ENCODE measurements at regions of chr4 and their contacts with region 1.

Region 1: GRCh38 chr4:159175085-159175988 is 72.5 kb downstream of the RAPGEF2 start:
- DNase-seq: peak; percentile 53 to 92
- H3K4me3 ChIP-seq: no peak overlapping the region
- H3K27ac ChIP-seq: peak overlapping the region in 1 of 5 donors; percentile 52
- H3K4me1 ChIP-seq: peaks cover 24 to 95% (median 52%) of the 10 kb centered on the region in 4 donors
- H3K27me3 ChIP-seq: no peaks in the 10 kb centered on the region
- CTCF ChIP-seq: peak in 5 of 7 experiments; percentile 71 to 87 (median 83)
- EP300 ChIP-seq: no peak
- POLR2A ChIP-seq: no peak

Region 2: DNA sequence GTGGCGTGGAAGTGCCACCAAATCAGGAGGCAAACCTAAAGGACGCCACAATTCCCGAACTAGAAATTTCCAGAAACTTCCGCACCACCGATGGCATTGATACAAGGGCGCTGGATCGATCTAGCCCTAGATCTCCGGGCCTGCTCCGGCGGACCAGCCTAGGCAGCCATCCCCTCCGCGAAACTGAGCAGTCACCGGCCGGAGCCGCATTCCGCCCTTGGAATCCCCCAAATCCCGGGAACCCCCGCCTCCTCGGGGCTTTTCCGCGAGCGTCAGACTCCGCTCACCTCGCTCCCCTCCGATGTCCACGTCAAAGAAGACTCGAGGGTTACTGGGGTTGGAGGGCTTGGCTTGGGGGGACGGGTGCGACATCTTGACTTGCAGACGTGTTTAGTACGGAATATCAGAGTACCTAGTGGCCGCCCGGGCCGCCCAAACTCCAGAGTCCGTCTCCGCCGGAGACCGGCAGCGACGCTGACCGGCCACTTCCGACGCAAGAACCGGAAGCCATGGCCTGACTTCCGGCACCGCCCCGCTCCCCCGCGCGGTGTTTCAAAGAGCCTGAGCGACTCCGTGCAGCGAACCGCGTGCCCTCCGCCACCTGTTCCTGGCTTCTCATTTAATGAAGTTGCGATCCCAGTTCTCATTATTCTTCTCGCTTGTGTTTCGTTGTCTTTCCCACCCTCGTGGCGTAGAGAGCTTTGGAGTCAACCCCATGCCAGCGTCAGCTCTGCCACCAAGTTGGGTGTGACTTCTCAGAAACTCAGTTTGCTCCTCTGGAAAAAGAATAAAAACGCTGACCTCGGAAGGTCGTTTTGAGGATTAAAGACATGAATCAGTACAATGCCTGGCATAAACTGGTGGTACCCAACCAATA is 452.2 kb before region 1 on chr4 and contains the start of gene PPID:
- intact Hi-C with region 1: loop called (anchors 10 kb)
- DNase-seq: peak; percentile 86 to 96
- H3K4me3 ChIP-seq: peak within 1 kb of the TSS; percentile 68 to 93 (median 82)
- H3K27ac ChIP-seq: peak within 1 kb of the TSS; percentile 88 to 95 (median 93)
- H3K4me1 ChIP-seq: peaks cover 10 to 30% (median 18%) of the 10 kb centered on the region in 4 donors
- H3K27me3 ChIP-seq: no peaks in the 10 kb centered on the region
- CTCF ChIP-seq: no peak
- EP300 ChIP-seq: no peak
- POLR2A ChIP-seq: peak in 1 of 4 donors; percentile 43
- total RNA-seq, gene PPID: 1.2 to 98.5 (median 12.9) TPM

Region 3: DNA sequence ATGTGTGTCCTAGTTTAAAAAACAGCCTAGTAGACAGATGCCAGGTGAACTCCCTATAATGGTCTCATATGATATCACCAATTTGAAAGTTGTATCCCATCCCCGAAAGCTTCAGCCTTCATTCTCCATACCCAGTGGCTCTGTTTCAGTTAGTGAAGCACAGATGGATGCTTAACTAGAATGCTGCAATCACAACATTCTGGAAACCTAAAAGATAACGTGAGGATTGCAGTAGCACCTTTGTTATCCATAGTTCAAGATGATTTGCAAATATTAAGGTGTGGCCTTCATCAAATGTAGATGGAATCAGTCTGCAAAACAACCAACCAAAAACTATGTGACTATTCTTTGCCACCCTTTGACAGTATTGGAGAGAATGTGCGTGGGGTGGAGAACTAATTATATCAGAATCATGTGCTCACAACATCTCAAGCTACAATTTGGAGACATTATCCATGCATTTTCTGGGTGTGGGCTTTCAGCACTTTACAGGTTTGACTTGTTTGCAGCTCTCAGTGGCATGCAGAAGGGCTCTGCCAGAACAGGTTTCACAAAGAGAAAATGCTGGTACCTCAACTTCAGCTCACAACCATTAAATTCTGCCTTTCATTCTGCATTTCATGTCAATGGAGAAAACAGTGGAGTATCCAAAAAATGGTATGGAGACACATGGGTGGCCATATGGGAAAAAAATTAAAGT is 433.9 kb before region 1 on chr4:
- intact Hi-C with region 1: no loop called
- DNase-seq: peak in 1 of 2 donors; percentile 23
- H3K4me3 ChIP-seq: no peak overlapping the region
- H3K27ac ChIP-seq: no peak overlapping the region
- H3K4me1 ChIP-seq: no peaks in the 10 kb centered on the region
- H3K27me3 ChIP-seq: no peaks in the 10 kb centered on the region
- CTCF ChIP-seq: no peak
- EP300 ChIP-seq: no peak
- POLR2A ChIP-seq: no peak

Region 4: GRCh38 chr4:158860856-158861255 is 314.5 kb before region 1 on chr4:
- intact Hi-C with region 1: loop called (anchors 10 kb)
- DNase-seq: no peak
- H3K4me3 ChIP-seq: no peak overlapping the region
- H3K27ac ChIP-seq: no peak overlapping the region
- H3K4me1 ChIP-seq: peaks cover 0 to 8% (median 6%) of the 10 kb centered on the region in 4 donors
- H3K27me3 ChIP-seq: no peaks in the 10 kb centered on the region
- CTCF ChIP-seq: no peak
- EP300 ChIP-seq: no peak
- POLR2A ChIP-seq: no peak

Region 5: GRCh38 chr4:159035570-159035969 is 139.8 kb before region 1 on chr4:
- intact Hi-C with region 1: no loop called
- DNase-seq: no peak
- H3K4me3 ChIP-seq: no peak overlapping the region
- H3K27ac ChIP-seq: no peak overlapping the region
- H3K4me1 ChIP-seq: no peaks in the 10 kb centered on the region
- H3K27me3 ChIP-seq: no peaks in the 10 kb centered on the region
- CTCF ChIP-seq: no peak
- EP300 ChIP-seq: no peak
- POLR2A ChIP-seq: no peak

Region 6: DNA sequence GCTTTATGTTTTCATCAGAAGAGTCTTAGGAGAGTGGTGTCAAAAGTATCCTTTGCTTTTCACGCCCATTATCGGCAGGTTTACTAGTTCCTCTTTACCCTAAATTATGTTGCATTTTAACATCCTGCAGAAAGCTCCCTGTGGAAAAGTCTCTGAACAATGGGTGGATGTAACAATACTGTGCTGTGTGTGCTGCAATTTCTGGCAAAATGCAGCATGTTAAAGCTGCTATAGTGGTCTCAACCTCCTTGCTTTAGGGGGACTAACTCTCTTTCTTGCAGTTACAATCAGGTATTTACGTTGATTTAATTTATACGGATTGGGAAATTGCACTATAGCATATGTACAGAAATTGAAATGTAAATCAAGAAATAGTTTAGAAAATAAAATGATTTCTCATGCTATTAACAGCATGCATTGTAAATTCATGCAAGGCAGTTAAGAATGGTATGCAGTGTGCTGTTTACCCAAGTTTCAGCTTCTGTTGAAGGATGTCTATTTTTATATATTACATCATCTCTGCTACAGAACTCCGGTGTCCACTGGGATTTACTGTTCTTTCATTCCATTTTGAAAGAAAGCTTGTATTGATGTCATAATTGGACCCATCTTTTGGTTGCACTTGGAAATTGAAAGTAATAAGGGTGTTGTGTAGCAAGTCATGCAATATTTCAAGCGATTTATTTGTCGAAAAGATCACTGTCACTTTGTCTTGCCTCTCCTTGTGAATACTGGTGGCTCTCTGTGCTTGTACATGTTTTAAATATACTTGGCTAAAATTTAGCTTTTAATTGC is 73.2 kb after region 1 on chr4:
- intact Hi-C with region 1: no loop called
- DNase-seq: peak in 1 of 2 donors; percentile 72
- H3K4me3 ChIP-seq: peak overlapping the region in 2 of 4 donors; percentile 5 to 7
- H3K27ac ChIP-seq: peak overlapping the region in 2 of 5 donors; percentile 21 to 52
- H3K4me1 ChIP-seq: peaks cover 0 to 20% (median 10%) of the 10 kb centered on the region in 4 donors
- H3K27me3 ChIP-seq: no peaks in the 10 kb centered on the region
- CTCF ChIP-seq: no peak
- EP300 ChIP-seq: no peak
- POLR2A ChIP-seq: no peak

Region 7: GRCh38 chr4:159298502-159298901 is 123.2 kb after region 1 on chr4:
- intact Hi-C with region 1: no loop called
- DNase-seq: no peak
- H3K4me3 ChIP-seq: no peak overlapping the region
- H3K27ac ChIP-seq: no peak overlapping the region
- H3K4me1 ChIP-seq: peaks cover 0 to 37% (median 15%) of the 10 kb centered on the region in 4 donors
- H3K27me3 ChIP-seq: no peaks in the 10 kb centered on the region
- CTCF ChIP-seq: no peak
- EP300 ChIP-seq: no peak
- POLR2A ChIP-seq: no peak